ENCODE measurements at regions of chr11 and their contacts with region 1.

Region 1: DNA sequence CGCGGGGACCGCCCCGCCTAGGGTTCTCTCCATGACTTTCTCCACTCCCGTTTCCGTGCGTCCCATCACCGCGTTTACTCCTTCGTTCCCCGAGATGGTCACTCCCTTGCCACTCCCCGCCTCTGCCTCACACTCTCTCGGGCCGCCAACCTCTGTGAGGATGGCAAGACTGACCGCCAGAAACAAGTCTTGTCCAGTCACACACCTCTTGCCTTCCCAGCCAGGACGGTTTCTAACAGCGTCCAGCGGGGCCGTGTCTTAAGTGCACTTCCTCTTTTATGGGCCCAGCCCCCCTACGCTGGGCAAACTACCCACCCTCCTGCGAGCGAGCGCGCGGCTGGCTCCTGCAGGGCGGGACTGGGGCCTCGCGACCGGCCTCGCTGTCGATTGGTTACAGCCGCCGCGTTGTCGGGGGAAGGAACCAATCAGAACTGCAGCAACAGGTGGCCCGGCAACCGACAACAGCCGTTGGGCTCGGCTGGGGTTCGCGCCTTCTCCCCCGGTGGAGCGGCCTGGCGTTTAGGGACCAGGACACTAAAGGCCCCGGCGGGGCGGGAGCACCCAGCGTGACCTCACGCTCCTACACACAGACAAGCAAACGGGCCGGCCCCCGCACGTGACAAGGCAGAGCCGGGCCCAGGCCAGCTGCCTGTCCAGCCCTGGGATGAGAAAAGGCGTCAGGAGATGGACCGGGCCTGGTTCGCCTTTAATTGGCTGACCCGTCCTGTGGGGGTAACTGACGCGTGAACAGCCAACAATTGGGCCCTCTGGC is 512 bp upstream of the UCP2 start:
- DNase-seq: peak; percentile 91 to 95 (median 93)
- H3K4me3 ChIP-seq: peak overlapping the region; percentile 87 to 99
- H3K4me3 Mint-ChIP-seq: peak overlapping the region; percentile 96 to 99 (median 99)
- H3K27ac ChIP-seq: peak overlapping the region; percentile 84
- H3K27ac Mint-ChIP-seq: peak overlapping the region; percentile 98 to 100 (median 99)
- H3K4me1 ChIP-seq: peaks cover 42% of the 10 kb centered on the region
- H3K4me1 Mint-ChIP-seq: peaks cover 19 to 70% (median 29%) of the 10 kb centered on the region in 4 donors
- H3K27me3 ChIP-seq: no peaks in the 10 kb centered on the region
- H3K27me3 Mint-ChIP-seq: no peaks in the 10 kb centered on the region

Region 2: DNA sequence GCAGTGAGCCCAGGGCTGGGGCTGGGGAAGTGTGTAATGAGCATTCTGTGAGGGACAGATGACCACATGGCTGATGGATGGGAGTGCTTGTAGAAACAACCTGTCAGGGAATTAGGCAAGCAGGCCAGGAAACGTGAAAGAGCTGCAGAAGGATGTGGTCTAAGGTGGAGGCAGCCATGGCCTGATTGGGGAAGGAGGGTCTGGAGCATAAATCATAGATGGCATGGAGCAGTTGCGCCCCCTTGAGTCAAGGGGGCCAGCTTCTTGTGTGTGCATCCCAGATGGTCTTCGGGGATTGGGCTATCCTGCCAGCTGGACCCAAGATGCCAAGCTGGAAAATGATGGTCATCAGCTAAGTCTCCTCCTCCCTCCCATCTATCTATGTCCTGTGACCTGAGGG is 1429.4 kb before region 1 on chr11:
- CTCF ChIA-PET with region 1: no interaction called
- POLR2A ChIA-PET with region 1: no interaction called
- intact Hi-C with region 1: no loop called
- DNase-seq: peak in 4 of 5 donors; percentile 17 to 32 (median 24)
- H3K4me3 ChIP-seq: no peak overlapping the region
- H3K4me3 Mint-ChIP-seq: no peak overlapping the region
- H3K27ac ChIP-seq: no peak overlapping the region
- H3K27ac Mint-ChIP-seq: no peak overlapping the region
- H3K4me1 ChIP-seq: no peaks in the 10 kb centered on the region
- H3K4me1 Mint-ChIP-seq: peaks cover 6 to 16% (median 12%) of the 10 kb centered on the region in 4 donors
- H3K27me3 ChIP-seq: no peaks in the 10 kb centered on the region
- H3K27me3 Mint-ChIP-seq: peaks cover 5 to 8% of the 10 kb centered on the region in 2 donors

Region 3: DNA sequence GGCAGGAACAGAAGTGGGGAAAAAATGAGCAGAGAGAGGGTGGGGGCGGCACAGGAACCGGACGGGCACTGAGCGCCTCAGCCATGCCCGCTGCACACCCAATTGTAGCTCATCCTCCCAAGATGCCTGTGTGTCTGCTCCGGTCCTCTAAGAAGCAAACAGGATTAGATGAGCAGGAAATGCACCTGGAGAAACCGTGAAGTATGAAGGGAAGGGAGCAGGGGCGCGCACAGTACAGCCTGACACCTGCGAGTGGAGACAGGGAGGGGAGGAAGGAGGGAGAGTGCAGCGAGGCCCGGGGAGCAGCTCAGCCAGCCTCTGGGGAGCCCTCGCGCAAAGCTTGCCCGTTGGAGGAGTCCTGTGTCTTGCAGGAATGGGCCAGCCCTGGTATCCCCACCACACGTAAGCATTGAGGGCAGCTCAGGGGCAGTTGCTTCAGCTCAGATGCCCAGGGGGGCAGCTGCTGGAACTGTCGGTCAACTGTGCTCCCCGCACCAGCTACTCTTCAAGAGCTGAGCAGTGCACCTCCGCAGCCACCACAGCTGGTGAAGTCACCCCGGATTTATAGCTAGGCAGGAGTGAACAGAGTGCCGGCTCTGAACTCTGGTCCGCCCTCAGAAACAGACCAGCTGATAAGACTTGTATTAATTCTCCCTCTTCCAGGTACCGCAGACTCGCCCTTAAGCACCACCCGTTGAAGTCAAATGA is 25.3 kb before region 1 on chr11:
- CTCF ChIA-PET with region 1: no interaction called
- POLR2A ChIA-PET with region 1: interaction called, 623 read pairs
- intact Hi-C with region 1: no loop called
- DNase-seq: no peak
- H3K4me3 ChIP-seq: no peak overlapping the region
- H3K4me3 Mint-ChIP-seq: peak overlapping the region in 5 of 8 donors; percentile 26 to 58 (median 36)
- H3K27ac ChIP-seq: no peak overlapping the region
- H3K27ac Mint-ChIP-seq: peak overlapping the region in 1 of 7 donors; percentile 56
- H3K4me1 ChIP-seq: no peaks in the 10 kb centered on the region
- H3K4me1 Mint-ChIP-seq: peaks cover 0 to 4% (median 0%) of the 10 kb centered on the region in 4 donors
- H3K27me3 ChIP-seq: no peaks in the 10 kb centered on the region
- H3K27me3 Mint-ChIP-seq: peaks cover 5 to 7% of the 10 kb centered on the region in 2 donors

Region 4: GRCh38 chr11:73972620-73973449 is 10.3 kb before region 1 on chr11:
- CTCF ChIA-PET with region 1: interaction called, 19 read pairs
- POLR2A ChIA-PET with region 1: interaction called, 623 read pairs
- intact Hi-C with region 1: loop called (anchors 1 kb)
- DNase-seq: no peak
- H3K4me3 ChIP-seq: no peak overlapping the region
- H3K4me3 Mint-ChIP-seq: peak overlapping the region in 5 of 8 donors; percentile 26 to 92 (median 77)
- H3K27ac ChIP-seq: peak overlapping the region; percentile 52
- H3K27ac Mint-ChIP-seq: peak overlapping the region; percentile 93 to 100 (median 96)
- H3K4me1 ChIP-seq: peaks cover 100% of the 10 kb centered on the region
- H3K4me1 Mint-ChIP-seq: peaks cover 75 to 100% (median 88%) of the 10 kb centered on the region in 4 donors
- H3K27me3 ChIP-seq: no peaks in the 10 kb centered on the region
- H3K27me3 Mint-ChIP-seq: no peaks in the 10 kb centered on the region

Region 5: GRCh38 chr11:74004759-74005615 is 21.8 kb after region 1 on chr11:
- CTCF ChIA-PET with region 1: interaction called, 38 read pairs
- POLR2A ChIA-PET with region 1: interaction called, 2,221 read pairs
- intact Hi-C with region 1: loop called (anchors 1 kb)
- DNase-seq: peak; percentile 88 to 95 (median 91)
- H3K4me3 ChIP-seq: peak overlapping the region; percentile 18 to 50
- H3K4me3 Mint-ChIP-seq: peak overlapping the region; percentile 79 to 91 (median 86)
- H3K27ac ChIP-seq: peak overlapping the region; percentile 60
- H3K27ac Mint-ChIP-seq: peak overlapping the region; percentile 91 to 99 (median 97)
- H3K4me1 ChIP-seq: peaks cover 72% of the 10 kb centered on the region
- H3K4me1 Mint-ChIP-seq: peaks cover 55 to 82% (median 71%) of the 10 kb centered on the region in 4 donors
- H3K27me3 ChIP-seq: no peaks in the 10 kb centered on the region
- H3K27me3 Mint-ChIP-seq: no peaks in the 10 kb centered on the region

Region 6: GRCh38 chr11:74030723-74031676 is 47.8 kb after region 1 on chr11:
- CTCF ChIA-PET with region 1: interaction called, 15 read pairs
- POLR2A ChIA-PET with region 1: interaction called, 49 read pairs
- intact Hi-C with region 1: loop called (anchors 1 kb)
- DNase-seq: no peak
- H3K4me3 ChIP-seq: no peak overlapping the region
- H3K4me3 Mint-ChIP-seq: peak overlapping the region; percentile 54 to 83 (median 70)
- H3K27ac ChIP-seq: peak overlapping the region; percentile 50
- H3K27ac Mint-ChIP-seq: peak overlapping the region; percentile 49 to 94 (median 91)
- H3K4me1 ChIP-seq: peaks cover 29% of the 10 kb centered on the region
- H3K4me1 Mint-ChIP-seq: peaks cover 30 to 48% (median 36%) of the 10 kb centered on the region in 4 donors
- H3K27me3 ChIP-seq: no peaks in the 10 kb centered on the region
- H3K27me3 Mint-ChIP-seq: no peaks in the 10 kb centered on the region

Region 7: GRCh38 chr11:74081428-74081827 is 98.3 kb after region 1 on chr11:
- CTCF ChIA-PET with region 1: no interaction called
- POLR2A ChIA-PET with region 1: no interaction called
- intact Hi-C with region 1: no loop called
- DNase-seq: no peak
- H3K4me3 ChIP-seq: no peak overlapping the region
- H3K4me3 Mint-ChIP-seq: no peak overlapping the region
- H3K27ac ChIP-seq: no peak overlapping the region
- H3K27ac Mint-ChIP-seq: no peak overlapping the region
- H3K4me1 ChIP-seq: no peaks in the 10 kb centered on the region
- H3K4me1 Mint-ChIP-seq: peaks cover 3 to 22% (median 9%) of the 10 kb centered on the region in 4 donors
- H3K27me3 ChIP-seq: no peaks in the 10 kb centered on the region
- H3K27me3 Mint-ChIP-seq: no peaks in the 10 kb centered on the region